HAP-1 (cell line): ENCODE measurements at regions of chr5 and their contacts with region 1.

Region 1: GRCh38 chr5:62340392-62340791 is 34.4 kb downstream of the KIF2A start:
- DNase-seq: no peak
- H3K4me3 ChIP-seq: no peak overlapping the region
- H3K4me1 ChIP-seq: no peaks in the 10 kb centered on the region
- H3K27me3 ChIP-seq: no peaks in the 10 kb centered on the region

Region 2: DNA sequence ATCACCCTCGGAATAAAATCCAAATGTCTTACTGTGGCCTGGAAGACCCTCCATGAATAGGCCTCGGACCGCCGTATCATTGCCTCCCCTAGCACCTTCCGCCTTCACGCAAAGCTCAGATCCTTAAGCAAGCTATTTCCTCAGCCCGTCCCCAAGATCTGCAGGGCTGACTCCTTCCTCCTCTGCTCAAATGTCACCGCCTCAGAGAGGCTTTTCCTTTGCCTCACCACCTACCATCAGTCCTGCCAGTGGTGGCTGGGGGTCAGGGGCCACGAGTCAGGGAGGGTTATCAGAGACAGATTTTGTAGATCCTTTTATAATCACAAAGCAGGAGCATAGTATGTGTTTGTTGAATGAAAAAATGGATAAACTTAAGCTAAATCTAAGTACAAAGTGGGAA is 108.8 kb before region 1 on chr5:
- in situ Hi-C with region 1: loop called (anchors 10 kb)
- DNase-seq: no peak
- H3K4me3 ChIP-seq: no peak overlapping the region
- H3K4me1 ChIP-seq: no peaks in the 10 kb centered on the region
- H3K27me3 ChIP-seq: no peaks in the 10 kb centered on the region

Region 3: GRCh38 chr5:62431735-62432620 is 91.6 kb after region 1 on chr5:
- in situ Hi-C with region 1: no loop called
- DNase-seq: no peak
- H3K4me3 ChIP-seq: no peak overlapping the region
- H3K4me1 ChIP-seq: 0 out of 2 replicates have a peak, but pooled peaks cover 4% of the 10 kb centered on the region
- H3K27me3 ChIP-seq: no peaks in the 10 kb centered on the region